ENCODE measurements at regions of chr4 and their contacts with region 1.

Region 1: DNA sequence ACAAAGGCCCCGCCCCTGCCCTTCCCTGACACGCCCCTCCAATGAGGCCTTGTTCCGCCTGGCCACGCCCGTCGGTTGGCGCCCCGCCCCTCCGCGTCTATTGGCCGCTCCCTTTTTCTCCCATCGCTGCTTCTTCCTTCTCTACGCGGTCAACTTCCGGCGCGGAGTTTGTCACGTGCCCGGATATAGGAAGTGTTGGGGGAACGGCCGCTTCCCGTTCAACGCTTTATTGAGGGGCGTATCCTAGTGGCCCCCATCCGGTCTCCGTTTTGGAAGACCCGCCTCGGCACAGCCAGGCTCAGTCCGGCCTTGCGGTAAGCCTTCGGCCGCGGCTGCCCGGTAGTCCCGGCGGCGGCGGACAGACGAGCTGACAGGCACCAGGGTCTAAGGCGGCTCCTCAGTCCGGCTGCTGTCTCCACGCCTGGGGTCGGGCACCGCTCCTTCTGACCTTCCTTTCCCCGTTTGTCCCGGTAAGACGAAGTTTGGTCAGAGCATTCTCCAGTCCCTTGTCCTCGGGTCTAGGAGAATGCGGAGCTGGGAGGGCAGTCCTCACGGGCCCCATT is at the start of gene EXOC1:
- DNase-seq: peak; percentile 98 to 99
- H3K4me3 ChIP-seq: peak within 1 kb of the TSS; percentile 69 to 99
- H3K27ac ChIP-seq: peak within 1 kb of the TSS; percentile 78
- H3K4me1 ChIP-seq: peaks cover 35% of the 10 kb centered on the region
- H3K27me3 ChIP-seq: no peaks in the 10 kb centered on the region
- CTCF ChIP-seq: no peak
- POLR2A ChIP-seq: peak in 1 of 2 donors; percentile 43
- total RNA-seq, gene EXOC1: 31.9 TPM

Region 2: GRCh38 chr4:54802336-54802735 is 1051.2 kb before region 1 on chr4:
- intact Hi-C with region 1: no loop called
- DNase-seq: no peak
- H3K4me3 ChIP-seq: no peak overlapping the region
- H3K27ac ChIP-seq: no peak overlapping the region
- H3K4me1 ChIP-seq: no peaks in the 10 kb centered on the region
- H3K27me3 ChIP-seq: no peaks in the 10 kb centered on the region
- CTCF ChIP-seq: no peak
- POLR2A ChIP-seq: no peak

Region 3: DNA sequence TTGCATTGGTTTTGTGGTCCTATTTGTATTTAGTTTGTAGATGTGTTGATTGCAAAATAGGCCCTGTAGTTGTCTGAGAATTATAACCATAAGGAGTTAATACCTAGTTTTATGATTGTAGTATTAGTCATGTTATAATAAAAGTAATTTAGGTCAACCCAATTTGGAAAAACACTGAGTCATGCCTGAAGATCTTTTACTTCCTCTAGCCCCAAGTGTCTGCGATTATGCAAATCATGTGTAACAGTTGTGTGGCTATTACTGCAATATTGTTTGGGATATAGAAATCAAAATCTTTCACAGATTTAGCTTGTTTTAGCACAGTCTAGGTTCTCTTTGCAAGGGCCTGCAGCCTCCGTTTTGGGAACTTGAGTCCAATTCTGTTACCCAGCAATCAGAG is 494.9 kb before region 1 on chr4:
- intact Hi-C with region 1: loop called (anchors 10 kb)
- DNase-seq: peak in 1 of 2 donors; percentile 83
- H3K4me3 ChIP-seq: peak overlapping the region in 1 of 2 donors; percentile 11
- H3K27ac ChIP-seq: peak overlapping the region; percentile 71
- H3K4me1 ChIP-seq: peaks cover 37% of the 10 kb centered on the region
- H3K27me3 ChIP-seq: no peaks in the 10 kb centered on the region
- CTCF ChIP-seq: no peak
- POLR2A ChIP-seq: no peak